CD8-positive, alpha-beta T cell (primary cell): ENCODE measurements at regions of chr2 and their contacts with region 1.

Region 1: GRCh38 chr2:37231241-37232130 is at the starts of genes CEBPZ and NDUFAF7:
- DNase-seq: peak; percentile 73 to 95 (median 87)
- ATAC-seq: peak; percentile 86
- H3K4me3 ChIP-seq: peak within 1 kb of the TSS; percentile 83 to 92
- H3K4me3 Mint-ChIP-seq: no peak within 1 kb of the TSS
- H3K27ac ChIP-seq: peak within 1 kb of the TSS; percentile 93 to 94
- H3K27ac Mint-ChIP-seq: no peak within 1 kb of the TSS
- H3K4me1 ChIP-seq: peaks cover 45% of the 10 kb centered on the region
- H3K4me1 Mint-ChIP-seq: peaks cover 44% of the 10 kb centered on the region
- H3K27me3 ChIP-seq: no peaks in the 10 kb centered on the region
- H3K27me3 Mint-ChIP-seq: no peaks in the 10 kb centered on the region
- CTCF ChIP-seq: no peak
- total RNA-seq, gene CEBPZ: 132 to 146 TPM
- total RNA-seq, gene NDUFAF7: 26.0 to 28.4 TPM

Region 2: GRCh38 chr2:36966370-36967235 is 264.9 kb before region 1 on chr2 and contains the start of gene STRN:
- CTCF ChIA-PET with region 1: no interaction called
- POLR2A ChIA-PET with region 1: no interaction called
- intact Hi-C with region 1: loop called in 1 of 2 experiments (anchors 1 kb)
- DNase-seq: peak; percentile 94 to 99 (median 98)
- ATAC-seq: peak; percentile 91
- H3K4me3 ChIP-seq: peak within 1 kb of the TSS; percentile 69 to 96
- H3K4me3 Mint-ChIP-seq: peak within 1 kb of the TSS; percentile 98
- H3K27ac ChIP-seq: peak within 1 kb of the TSS; percentile 76 to 97
- H3K27ac Mint-ChIP-seq: peak within 1 kb of the TSS; percentile 99
- H3K4me1 ChIP-seq: peaks cover 19% of the 10 kb centered on the region
- H3K4me1 Mint-ChIP-seq: peaks cover 50% of the 10 kb centered on the region
- H3K27me3 ChIP-seq: no peaks in the 10 kb centered on the region
- H3K27me3 Mint-ChIP-seq: no peaks in the 10 kb centered on the region
- CTCF ChIP-seq: no peak
- total RNA-seq, gene STRN: 15.6 to 17.4 TPM

Region 3: DNA sequence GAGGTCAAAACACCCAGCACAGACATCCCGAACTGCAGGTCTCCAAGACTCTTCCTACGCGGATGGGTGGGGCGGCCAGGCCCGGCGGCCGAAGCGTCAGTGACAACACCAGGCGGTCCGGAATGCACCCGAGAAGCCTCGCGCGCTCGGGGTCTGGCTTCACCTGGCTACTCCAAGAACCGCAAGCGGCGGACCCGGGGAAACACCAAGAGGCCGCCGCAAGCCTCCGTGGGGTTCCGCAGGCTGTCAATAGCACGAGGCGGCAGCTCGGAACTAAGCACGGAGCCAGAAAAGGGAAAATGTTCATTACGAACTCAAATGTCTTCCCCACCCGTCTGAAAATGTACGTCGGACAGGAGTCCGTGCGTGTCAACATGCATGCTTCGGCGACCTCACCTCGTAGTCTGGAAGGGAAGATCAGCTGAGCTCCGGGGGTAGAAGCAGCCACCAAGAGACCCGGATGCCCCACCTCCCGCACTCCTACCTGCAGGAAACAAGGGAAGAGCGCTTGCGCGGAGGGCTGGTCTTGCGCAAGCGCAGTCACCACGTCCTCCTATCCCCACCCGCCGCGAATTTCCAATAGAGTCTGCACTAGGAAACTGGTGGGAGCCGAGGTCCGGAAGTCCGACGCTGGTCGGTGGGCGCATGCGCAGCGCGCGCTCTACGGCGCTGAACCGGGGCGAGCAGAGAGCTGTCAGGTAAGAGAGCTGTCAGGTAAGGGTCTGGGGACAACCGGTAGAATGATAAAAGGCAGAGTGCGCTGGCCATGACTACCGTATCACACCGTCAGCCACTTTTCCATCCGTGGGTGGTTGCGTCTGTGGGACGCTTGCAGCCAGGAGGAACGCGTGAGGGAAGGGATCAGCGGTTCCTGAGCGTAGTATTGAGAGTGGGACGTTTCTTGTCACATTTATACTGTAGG is 147.4 kb before region 1 on chr2 and contains the starts of genes GPATCH11 and HEATR5B:
- CTCF ChIA-PET with region 1: no interaction called
- POLR2A ChIA-PET with region 1: no interaction called
- intact Hi-C with region 1: loop called (anchors 1 to 10 kb)
- DNase-seq: peak; percentile 73 to 97 (median 92)
- ATAC-seq: peak; percentile 84
- H3K4me3 ChIP-seq: peak within 1 kb of the TSS; percentile 76 to 99
- H3K4me3 Mint-ChIP-seq: no peak within 1 kb of the TSS
- H3K27ac ChIP-seq: peak within 1 kb of the TSS; percentile 67 to 85
- H3K27ac Mint-ChIP-seq: peak within 1 kb of the TSS; percentile 14
- H3K4me1 ChIP-seq: peaks cover 51% of the 10 kb centered on the region
- H3K4me1 Mint-ChIP-seq: peaks cover 50% of the 10 kb centered on the region
- H3K27me3 ChIP-seq: no peaks in the 10 kb centered on the region
- H3K27me3 Mint-ChIP-seq: no peaks in the 10 kb centered on the region
- CTCF ChIP-seq: no peak
- total RNA-seq, gene GPATCH11: 5.4 to 6.4 TPM
- total RNA-seq, gene HEATR5B: 9.9 to 11.0 TPM

Region 4: GRCh38 chr2:37156857-37157714 is 74.4 kb before region 1 on chr2 and contains the start of gene EIF2AK2:
- CTCF ChIA-PET with region 1: no interaction called
- POLR2A ChIA-PET with region 1: interaction called, 5 read pairs
- intact Hi-C with region 1: loop called (anchors 2 kb)
- DNase-seq: peak; percentile 67 to 91 (median 84)
- ATAC-seq: peak; percentile 97
- H3K4me3 ChIP-seq: peak within 1 kb of the TSS; percentile 82 to 94
- H3K4me3 Mint-ChIP-seq: peak within 1 kb of the TSS; percentile 94
- H3K27ac ChIP-seq: peak within 1 kb of the TSS; percentile 62 to 76
- H3K27ac Mint-ChIP-seq: peak within 1 kb of the TSS; percentile 91
- H3K4me1 ChIP-seq: peaks cover 27% of the 10 kb centered on the region
- H3K4me1 Mint-ChIP-seq: peaks cover 50% of the 10 kb centered on the region
- H3K27me3 ChIP-seq: no peaks in the 10 kb centered on the region
- H3K27me3 Mint-ChIP-seq: no peaks in the 10 kb centered on the region
- CTCF ChIP-seq: no peak
- total RNA-seq, gene EIF2AK2: 30.1 to 33.7 TPM

Region 5: GRCh38 chr2:37168217-37168981 is 63.1 kb before region 1 on chr2:
- CTCF ChIA-PET with region 1: interaction called, 5 read pairs
- POLR2A ChIA-PET with region 1: no interaction called
- intact Hi-C with region 1: loop called in 1 of 2 experiments (anchors 2 kb)
- DNase-seq: peak in 3 of 9 experiments; percentile 10 to 62 (median 51)
- ATAC-seq: peak; percentile 71
- H3K4me3 ChIP-seq: no peak overlapping the region
- H3K4me3 Mint-ChIP-seq: no peak overlapping the region
- H3K27ac ChIP-seq: no peak overlapping the region
- H3K27ac Mint-ChIP-seq: no peak overlapping the region
- H3K4me1 ChIP-seq: no peaks in the 10 kb centered on the region
- H3K4me1 Mint-ChIP-seq: no peaks in the 10 kb centered on the region
- H3K27me3 ChIP-seq: peaks cover 0 to 2% of the 10 kb centered on the region in 2 experiments
- H3K27me3 Mint-ChIP-seq: peaks cover 2% of the 10 kb centered on the region
- CTCF ChIP-seq: peak; percentile 79

Region 6: GRCh38 chr2:37196320-37197195 is 34.9 kb before region 1 on chr2 and contains the start of gene CEBPZOS:
- CTCF ChIA-PET with region 1: no interaction called
- POLR2A ChIA-PET with region 1: interaction called, 10 read pairs
- intact Hi-C with region 1: loop called (anchors 1 to 2 kb)
- DNase-seq: peak; percentile 81 to 96 (median 91)
- ATAC-seq: peak; percentile 89
- H3K4me3 ChIP-seq: peak within 1 kb of the TSS; percentile 74 to 78
- H3K4me3 Mint-ChIP-seq: peak within 1 kb of the TSS; percentile 96
- H3K27ac ChIP-seq: peak within 1 kb of the TSS; percentile 74 to 78
- H3K27ac Mint-ChIP-seq: peak within 1 kb of the TSS; percentile 96
- H3K4me1 ChIP-seq: peaks cover 24% of the 10 kb centered on the region
- H3K4me1 Mint-ChIP-seq: peaks cover 35% of the 10 kb centered on the region
- H3K27me3 ChIP-seq: no peaks in the 10 kb centered on the region
- H3K27me3 Mint-ChIP-seq: no peaks in the 10 kb centered on the region
- CTCF ChIP-seq: no peak
- total RNA-seq, gene CEBPZOS: 17.5 to 18.2 TPM

Region 7: GRCh38 chr2:37201766-37202165 is 29.7 kb before region 1 on chr2:
- CTCF ChIA-PET with region 1: no interaction called
- POLR2A ChIA-PET with region 1: interaction called, 10 read pairs
- intact Hi-C with region 1: loop called (anchors 1 to 2 kb)
- DNase-seq: peak in 7 of 9 experiments; percentile 13 to 68 (median 49)
- ATAC-seq: peak; percentile 68
- H3K4me3 ChIP-seq: no peak overlapping the region
- H3K4me3 Mint-ChIP-seq: no peak overlapping the region
- H3K27ac ChIP-seq: peak overlapping the region in 1 of 2 experiments; percentile 23
- H3K27ac Mint-ChIP-seq: peak overlapping the region; percentile 14
- H3K4me1 ChIP-seq: peaks cover 27% of the 10 kb centered on the region
- H3K4me1 Mint-ChIP-seq: peaks cover 46% of the 10 kb centered on the region
- H3K27me3 ChIP-seq: no peaks in the 10 kb centered on the region
- H3K27me3 Mint-ChIP-seq: no peaks in the 10 kb centered on the region
- CTCF ChIP-seq: no peak